ENCODE measurements at regions of chr17 and their contacts with region 1.

Region 1: DNA sequence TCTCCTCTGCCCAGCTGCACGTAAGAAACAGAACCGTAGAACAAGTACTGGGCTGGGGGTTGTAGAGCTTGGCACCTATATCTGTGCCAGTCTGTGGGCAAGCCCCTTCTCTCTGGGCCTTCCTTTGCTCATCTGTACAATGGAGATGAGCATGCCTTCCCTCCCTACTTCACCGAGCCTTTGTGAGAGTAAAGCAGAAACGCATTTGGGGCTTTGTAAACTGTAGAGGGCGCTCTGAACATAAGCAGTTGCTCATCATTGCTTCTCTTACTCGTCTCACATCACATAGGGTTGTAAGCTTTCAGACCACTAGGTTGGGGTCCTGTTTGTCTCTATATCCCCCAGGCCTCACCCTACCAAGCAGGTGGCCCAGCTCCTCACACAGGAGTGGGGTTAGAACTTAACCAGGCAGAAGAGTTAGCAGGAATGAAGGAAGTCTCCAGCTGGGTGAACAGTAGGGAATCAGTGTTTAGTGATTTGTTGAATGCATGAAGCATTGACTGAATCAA is 15.1 kb downstream of the SAMD14 start:
- DNase-seq: no peak
- ATAC-seq: peak in 2 of 8 donors; percentile 11 to 15
- H3K4me3 ChIP-seq: no peak overlapping the region
- H3K27ac ChIP-seq: peak overlapping the region in 3 of 10 donors; percentile 91 to 95 (median 95)
- H3K4me1 ChIP-seq: peaks cover 29 to 79% (median 44%) of the 10 kb centered on the region in 9 donors
- H3K27me3 ChIP-seq: peaks cover 0 to 50% (median 0%) of the 10 kb centered on the region in 7 donors
- CTCF ChIP-seq: peak in 7 of 9 donors; percentile 51 to 74 (median 65)

Region 2: DNA sequence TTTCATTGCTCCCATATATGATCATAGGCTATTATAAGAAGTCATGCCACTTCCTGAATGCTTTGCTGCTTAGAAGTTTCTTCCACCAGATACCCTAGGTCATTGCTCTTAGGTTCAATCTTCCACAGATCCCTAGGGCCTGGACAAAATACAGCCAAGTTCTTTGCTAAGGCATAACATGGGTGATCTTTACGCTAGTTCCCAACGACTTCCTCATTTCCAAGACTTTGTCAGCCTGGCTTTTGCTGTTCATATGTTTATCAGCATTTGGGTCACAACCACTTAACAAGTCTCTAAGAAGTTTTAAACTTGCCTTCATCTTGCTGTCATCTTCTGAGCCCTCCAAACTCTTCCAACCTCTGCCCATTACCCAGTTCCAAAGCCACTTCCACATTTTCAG is 99.8 kb before region 1 on chr17:
- intact Hi-C with region 1: no loop called
- DNase-seq: no peak
- ATAC-seq: no peak
- H3K4me3 ChIP-seq: no peak overlapping the region
- H3K27ac ChIP-seq: no peak overlapping the region
- H3K4me1 ChIP-seq: no peaks in the 10 kb centered on the region
- H3K27me3 ChIP-seq: peaks cover 0 to 26% (median 12%) of the 10 kb centered on the region in 7 donors
- CTCF ChIP-seq: no peak

Region 3: GRCh38 chr17:50169121-50169764 is 54.3 kb after region 1 on chr17:
- intact Hi-C with region 1: loop called in 5 of 10 experiments (anchors 5 to 10 kb)
- DNase-seq: peak; percentile 24 to 57
- ATAC-seq: peak in 4 of 8 donors; percentile 1 to 30 (median 5)
- H3K4me3 ChIP-seq: no peak overlapping the region
- H3K27ac ChIP-seq: peak overlapping the region in 2 of 10 donors; percentile 35 to 94
- H3K4me1 ChIP-seq: peaks cover 5 to 83% (median 42%) of the 10 kb centered on the region in 9 donors
- H3K27me3 ChIP-seq: no peaks in the 10 kb centered on the region
- CTCF ChIP-seq: peak; percentile 23 to 69 (median 57)